Natural killer cell (primary cell): ENCODE measurements at regions of chr19 and their contacts with region 1.

Region 1: GRCh38 chr19:14117668-14118164 is at the start of gene PRKACA:
- DNase-seq: peak; percentile 98 to 99
- ATAC-seq: peak; percentile 85 to 96 (median 88)
- H3K4me3 ChIP-seq: peak within 1 kb of the TSS; percentile 65
- H3K4me3 Mint-ChIP-seq: peak within 1 kb of the TSS; percentile 97
- H3K27ac ChIP-seq: peak within 1 kb of the TSS; percentile 99
- H3K27ac Mint-ChIP-seq: peak within 1 kb of the TSS; percentile 94 to 97
- H3K4me1 ChIP-seq: peaks cover 52% of the 10 kb centered on the region
- H3K4me1 Mint-ChIP-seq: peaks cover 27 to 36% of the 10 kb centered on the region in 2 donors
- H3K27me3 ChIP-seq: no peaks in the 10 kb centered on the region
- H3K27me3 Mint-ChIP-seq: no peaks in the 10 kb centered on the region
- CTCF ChIP-seq: no peak
- total RNA-seq, gene PRKACA: 68.6 to 71.8 (median 69.3) TPM

Region 2: DNA sequence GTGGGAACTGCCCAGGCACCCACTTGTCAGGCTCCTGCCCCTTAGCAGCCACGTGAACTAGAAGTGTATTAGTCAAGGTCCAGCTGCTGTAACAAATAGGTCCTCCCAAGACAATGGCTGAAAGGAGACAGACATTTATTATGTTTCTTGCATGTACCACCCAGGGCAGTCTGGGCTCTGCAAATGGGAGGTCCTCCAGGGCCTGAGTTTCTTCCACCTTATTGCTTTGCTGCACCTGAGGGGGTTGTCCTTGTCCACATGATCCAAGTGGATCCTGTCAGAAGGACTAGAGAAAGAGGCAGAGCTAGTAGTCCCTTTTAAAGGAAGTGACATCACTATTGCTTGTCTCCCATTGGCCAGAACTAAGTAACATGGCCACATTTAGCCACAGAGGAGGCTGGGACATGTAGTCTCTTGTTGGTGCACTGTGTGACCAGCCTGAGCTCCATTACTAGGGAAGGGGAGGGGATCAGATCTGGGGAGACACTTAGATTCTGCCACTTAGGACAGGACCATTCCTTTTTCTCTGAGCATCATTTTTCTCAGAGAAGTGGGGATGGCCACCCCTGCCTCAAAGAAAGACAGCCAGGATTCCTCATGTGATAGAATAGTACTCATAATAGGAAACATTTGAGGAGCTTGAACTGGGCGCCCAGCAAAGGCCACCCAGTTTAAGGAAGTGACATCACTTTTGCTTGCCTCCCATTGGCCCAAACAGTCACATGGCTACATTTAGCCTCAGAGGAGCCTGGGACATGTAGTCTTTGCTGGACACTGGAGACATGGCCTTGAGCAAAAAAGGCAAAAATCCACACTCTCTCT is 196.6 kb before region 1 on chr19:
- intact Hi-C with region 1: no loop called
- DNase-seq: peak; percentile 25 to 53
- ATAC-seq: peak; percentile 74 to 88 (median 85)
- H3K4me3 ChIP-seq: no peak overlapping the region
- H3K4me3 Mint-ChIP-seq: no peak overlapping the region
- H3K27ac ChIP-seq: no peak overlapping the region
- H3K27ac Mint-ChIP-seq: peak overlapping the region in 1 of 2 donors; percentile 63
- H3K4me1 ChIP-seq: no peaks in the 10 kb centered on the region
- H3K4me1 Mint-ChIP-seq: no peaks in the 10 kb centered on the region
- H3K27me3 ChIP-seq: no peaks in the 10 kb centered on the region
- H3K27me3 Mint-ChIP-seq: no peaks in the 10 kb centered on the region
- CTCF ChIP-seq: no peak

Region 3: GRCh38 chr19:14081325-14082093 is 36.2 kb before region 1 on chr19:
- intact Hi-C with region 1: loop called (anchors 5 kb)
- DNase-seq: peak; percentile 99 to 100
- ATAC-seq: peak; percentile 92 to 97 (median 94)
- H3K4me3 ChIP-seq: peak overlapping the region; percentile 49
- H3K4me3 Mint-ChIP-seq: peak overlapping the region; percentile 97
- H3K27ac ChIP-seq: peak overlapping the region; percentile 78
- H3K27ac Mint-ChIP-seq: peak overlapping the region; percentile 94 to 96
- H3K4me1 ChIP-seq: peaks cover 18% of the 10 kb centered on the region
- H3K4me1 Mint-ChIP-seq: peaks cover 6 to 14% of the 10 kb centered on the region in 2 donors
- H3K27me3 ChIP-seq: no peaks in the 10 kb centered on the region
- H3K27me3 Mint-ChIP-seq: no peaks in the 10 kb centered on the region
- CTCF ChIP-seq: no peak

Region 4: DNA sequence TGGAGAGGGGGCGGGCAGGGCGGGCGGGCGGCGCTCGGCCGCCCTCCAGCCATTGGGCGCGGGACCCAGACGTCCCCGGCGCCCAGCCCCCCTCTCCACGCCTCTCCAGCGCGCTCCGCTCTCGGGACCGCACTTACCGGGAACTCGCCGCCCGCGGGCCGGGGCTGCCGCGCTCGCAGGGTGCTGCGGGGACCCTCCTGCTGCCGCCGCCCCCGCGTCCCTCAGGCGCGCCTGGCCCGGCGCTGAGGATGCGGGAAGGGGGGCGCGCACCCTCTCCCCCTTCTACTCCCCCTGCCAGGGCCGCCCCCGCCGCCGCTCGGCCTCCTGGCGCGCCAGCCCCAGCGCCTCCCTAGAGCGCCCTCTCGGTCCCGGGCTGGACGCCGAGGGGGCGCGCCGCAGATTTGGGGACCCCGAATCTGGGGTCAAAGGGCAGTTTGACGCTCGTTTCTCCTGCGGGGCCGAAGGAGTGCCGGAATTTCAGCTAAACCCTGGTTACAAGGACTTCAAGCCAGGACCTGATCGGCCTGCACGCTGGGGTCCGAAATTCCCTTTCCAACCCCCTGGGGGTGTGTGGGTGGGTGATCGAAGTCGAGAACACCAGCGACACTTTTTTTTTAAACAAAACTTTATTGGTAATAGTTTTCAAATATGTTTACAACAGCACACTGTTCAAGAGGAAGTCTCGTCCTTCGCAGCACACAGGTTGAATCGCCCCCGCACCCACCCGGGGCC is 26.5 kb before region 1 on chr19:
- intact Hi-C with region 1: loop called (anchors 2 kb)
- DNase-seq: peak; percentile 67 to 79
- ATAC-seq: peak; percentile 68 to 83 (median 75)
- H3K4me3 ChIP-seq: peak overlapping the region; percentile 73
- H3K4me3 Mint-ChIP-seq: peak overlapping the region; percentile 97
- H3K27ac ChIP-seq: peak overlapping the region; percentile 63
- H3K27ac Mint-ChIP-seq: peak overlapping the region; percentile 86 to 90
- H3K4me1 ChIP-seq: peaks cover 17% of the 10 kb centered on the region
- H3K4me1 Mint-ChIP-seq: peaks cover 14 to 15% of the 10 kb centered on the region in 2 donors
- H3K27me3 ChIP-seq: no peaks in the 10 kb centered on the region
- H3K27me3 Mint-ChIP-seq: no peaks in the 10 kb centered on the region
- CTCF ChIP-seq: no peak